ENCODE measurements at regions of chr7 and their contacts with region 1.

Region 1: DNA sequence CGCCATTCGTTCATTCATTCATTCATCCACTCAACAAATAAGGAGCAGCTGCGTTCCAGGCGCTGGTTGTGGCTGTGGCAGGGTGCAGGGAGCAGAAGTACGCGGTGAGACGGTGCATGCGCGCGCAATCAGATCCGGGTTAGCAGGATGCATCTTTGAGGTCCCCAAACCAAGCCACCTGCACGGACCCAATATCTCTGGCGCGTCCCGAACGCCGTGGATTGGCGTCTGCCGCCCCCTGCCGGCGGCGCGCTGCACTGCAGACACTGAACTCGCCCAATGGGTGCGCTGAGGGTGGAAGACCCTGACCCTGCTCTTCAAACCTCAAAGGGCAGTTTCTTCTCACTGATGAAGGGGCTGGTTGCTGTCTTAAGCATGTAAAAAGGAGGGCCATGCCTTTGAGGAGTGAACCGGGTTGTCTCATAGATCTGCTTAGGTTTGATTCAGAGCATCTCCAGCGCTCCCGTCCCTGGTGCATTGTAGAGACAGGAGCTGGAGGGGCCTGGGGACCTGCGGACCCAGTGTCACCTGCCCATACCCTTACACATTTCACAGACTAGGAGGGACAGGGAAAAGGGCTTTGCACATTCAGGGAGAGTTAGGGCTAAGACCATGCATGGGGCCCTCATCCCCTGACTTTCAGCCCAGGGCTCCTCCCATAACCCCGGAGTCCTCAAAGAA is 102.5 kb downstream of the RAMP3 start:
- H3K4me3 ChIP-seq: no peak overlapping the region
- H3K27ac ChIP-seq: no peak overlapping the region
- H3K4me1 ChIP-seq: no peaks in the 10 kb centered on the region
- CTCF ChIP-seq: peak; percentile 74

Region 2: GRCh38 chr7:45157653-45158401 is 102.3 kb before region 1 on chr7 and contains the start of gene RAMP3:
- CTCF ChIA-PET with region 1: interaction called, 35 read pairs
- POLR2A ChIA-PET with region 1: no interaction called
- H3K4me3 ChIP-seq: no peak within 1 kb of the TSS
- H3K27ac ChIP-seq: no peak within 1 kb of the TSS
- H3K4me1 ChIP-seq: no peaks in the 10 kb centered on the region; the same call in 1 of the 2 replicates
- CTCF ChIP-seq: no peak

Region 3: GRCh38 chr7:45239486-45239885 is 20.6 kb before region 1 on chr7:
- CTCF ChIA-PET with region 1: interaction called, 12 read pairs
- POLR2A ChIA-PET with region 1: no interaction called
- H3K4me3 ChIP-seq: no peak overlapping the region
- H3K27ac ChIP-seq: no peak overlapping the region
- H3K4me1 ChIP-seq: no peaks in the 10 kb centered on the region
- CTCF ChIP-seq: no peak

Region 4: GRCh38 chr7:45246354-45246753 is 13.8 kb before region 1 on chr7:
- CTCF ChIA-PET with region 1: interaction called, 12 read pairs
- POLR2A ChIA-PET with region 1: no interaction called
- H3K4me3 ChIP-seq: no peak overlapping the region
- H3K27ac ChIP-seq: no peak overlapping the region
- H3K4me1 ChIP-seq: no peaks in the 10 kb centered on the region
- CTCF ChIP-seq: no peak

Region 5: DNA sequence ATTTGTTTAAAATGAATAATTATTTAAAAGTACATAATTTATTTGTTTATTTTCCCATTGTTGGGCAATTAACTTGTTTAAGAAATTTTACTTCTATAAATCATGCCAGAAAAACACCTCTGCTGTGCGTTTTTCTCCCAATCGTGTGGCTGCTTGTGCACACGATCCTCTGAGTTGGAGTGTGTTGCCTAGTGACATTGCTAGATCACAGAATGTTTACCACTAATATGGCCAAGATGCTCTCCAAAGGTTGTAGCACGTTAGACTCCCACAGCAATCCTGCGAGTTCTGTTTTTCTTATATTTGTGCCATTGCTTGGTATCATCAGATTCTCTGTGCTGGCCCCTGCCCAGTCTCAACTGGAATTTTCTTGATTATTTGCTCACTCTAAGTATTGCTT is 106.9 kb after region 1 on chr7:
- CTCF ChIA-PET with region 1: no interaction called
- POLR2A ChIA-PET with region 1: no interaction called
- H3K4me3 ChIP-seq: no peak overlapping the region
- H3K27ac ChIP-seq: no peak overlapping the region
- H3K4me1 ChIP-seq: no peaks in the 10 kb centered on the region
- CTCF ChIP-seq: no peak

Region 6: GRCh38 chr7:45420843-45421495 is 160.9 kb after region 1 on chr7:
- CTCF ChIA-PET with region 1: no interaction called
- POLR2A ChIA-PET with region 1: no interaction called
- H3K4me3 ChIP-seq: no peak overlapping the region
- H3K27ac ChIP-seq: no peak overlapping the region
- H3K4me1 ChIP-seq: no peaks in the 10 kb centered on the region
- CTCF ChIP-seq: no peak

Measured in HEK293 (cell line).